RWPE1 (cell line): ENCODE measurements at regions of chr7 and their contacts with region 1.

Region 1: DNA sequence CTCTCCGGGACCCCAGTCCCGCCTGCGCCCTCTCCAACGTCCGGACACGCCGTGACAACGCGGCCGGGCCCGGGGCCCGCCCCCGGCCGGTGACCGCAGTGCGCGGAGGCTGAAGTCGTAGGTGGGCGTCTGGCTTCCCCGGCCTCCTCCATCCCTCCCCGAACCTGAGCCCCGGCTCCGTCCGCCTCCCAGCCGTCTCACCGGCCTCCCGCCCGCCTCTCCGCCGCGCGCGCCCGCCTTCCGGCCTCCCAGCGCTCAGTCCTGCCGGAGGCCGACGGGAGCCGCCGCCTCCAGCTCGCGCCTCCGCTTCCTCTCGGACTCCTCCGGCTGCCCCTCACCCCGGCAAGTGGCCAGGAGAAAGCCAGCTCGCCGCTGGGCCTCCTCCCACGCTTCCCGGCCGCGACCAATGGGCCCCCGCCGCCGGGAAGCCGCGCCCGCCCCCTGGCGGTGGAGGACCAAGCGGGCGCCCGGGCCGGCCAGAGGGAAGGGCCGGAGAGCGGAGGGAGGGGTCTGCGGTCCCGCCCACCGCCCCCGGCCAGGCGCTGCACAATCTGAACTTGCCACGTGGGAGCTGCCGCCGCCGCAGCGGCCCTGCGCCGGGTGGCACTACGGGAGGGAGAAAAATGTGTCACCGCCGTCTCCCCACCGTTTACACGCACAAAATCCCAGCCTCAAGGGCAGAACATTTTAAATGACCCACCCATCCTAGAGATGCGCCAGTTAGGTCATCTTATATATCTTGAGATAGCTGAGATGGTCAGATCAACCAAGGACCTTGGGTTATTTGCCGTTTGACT is at the start of gene FAM3C:
- DNase-seq: peak; percentile 90
- H3K27ac ChIP-seq: peak within 1 kb of the TSS; percentile 81
- CTCF ChIP-seq: peak; percentile 99

Region 2: GRCh38 chr7:121379930-121380329 is 16.2 kb before region 1 on chr7:
- CTCF ChIA-PET with region 1: interaction called, 10 read pairs
- POLR2A ChIA-PET with region 1: no interaction called
- DNase-seq: no peak
- H3K27ac ChIP-seq: no peak overlapping the region
- CTCF ChIP-seq: no peak

Region 3: GRCh38 chr7:121576148-121576917 is 180.2 kb after region 1 on chr7:
- CTCF ChIA-PET with region 1: no interaction called
- POLR2A ChIA-PET with region 1: no interaction called
- DNase-seq: no peak
- H3K27ac ChIP-seq: no peak overlapping the region
- CTCF ChIP-seq: no peak